Activated CD8-positive, alpha-beta T cell treated with anti-CD3 and anti-CD28 coated beads for 36 hours (primary cell): ENCODE measurements at regions of chr11 and their contacts with region 1.

Region 1: DNA sequence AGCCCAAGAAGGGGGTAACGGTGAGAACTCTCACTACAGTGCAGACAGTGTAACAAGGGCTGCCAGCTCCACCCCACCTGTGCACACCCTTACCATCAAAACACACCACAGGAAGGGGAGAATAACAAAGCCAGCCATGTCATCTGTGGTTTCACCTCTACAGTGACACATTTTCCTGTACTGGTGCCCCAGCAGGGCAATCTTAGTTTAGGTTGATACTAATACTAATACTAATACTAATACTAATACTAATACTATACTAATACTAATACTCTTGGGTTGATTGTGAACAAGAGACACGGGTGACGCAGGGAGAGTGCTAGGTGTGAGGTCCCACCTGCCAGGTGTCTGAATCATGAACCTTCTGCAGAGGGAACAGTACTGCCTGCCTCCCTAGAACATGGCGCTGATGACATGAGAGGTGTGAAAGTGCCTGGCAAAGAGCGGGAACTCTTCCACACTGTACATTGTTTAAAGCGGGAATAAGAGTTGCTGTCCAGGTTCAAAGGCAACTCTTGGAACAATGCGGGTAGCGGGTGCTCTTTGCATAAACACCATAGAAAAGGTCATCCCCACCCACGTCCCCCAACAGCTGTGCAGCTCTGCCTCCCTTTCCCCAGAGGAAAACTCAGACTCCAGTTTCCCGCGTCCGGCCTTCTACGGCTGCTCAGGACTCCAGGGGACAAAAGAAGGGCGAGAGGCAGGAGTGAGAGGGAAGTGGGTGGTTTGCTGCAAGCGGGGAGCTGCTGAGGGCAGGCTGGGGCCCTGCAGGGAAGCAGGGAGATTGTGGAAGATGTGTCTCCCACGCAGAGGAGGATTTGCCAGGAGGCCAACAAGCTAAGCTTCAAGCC is 25.0 kb upstream of the TMPRSS4 start:
- DNase-seq: peak; percentile 85
- ATAC-seq: peak; percentile 78
- H3K4me3 Mint-ChIP-seq: no peak overlapping the region
- H3K27ac Mint-ChIP-seq: peak overlapping the region; percentile 82
- H3K4me1 Mint-ChIP-seq: peaks cover 59% of the 10 kb centered on the region
- H3K27me3 Mint-ChIP-seq: no peaks in the 10 kb centered on the region
- CTCF ChIP-seq: no peak

Region 2: GRCh38 chr11:117817368-117818040 is 234.3 kb before region 1 on chr11:
- CTCF ChIA-PET with region 1: interaction called, 168 read pairs
- POLR2A ChIA-PET with region 1: interaction called, 4 read pairs
- intact Hi-C with region 1: loop called (anchors 5 kb)
- DNase-seq: peak; percentile 94
- ATAC-seq: peak; percentile 53
- H3K4me3 Mint-ChIP-seq: peak overlapping the region; percentile 63
- H3K27ac Mint-ChIP-seq: peak overlapping the region; percentile 98
- H3K4me1 Mint-ChIP-seq: peaks cover 72% of the 10 kb centered on the region
- H3K27me3 Mint-ChIP-seq: no peaks in the 10 kb centered on the region
- CTCF ChIP-seq: peak; percentile 99

Region 3: GRCh38 chr11:117851106-117851505 is 200.7 kb before region 1 on chr11:
- CTCF ChIA-PET with region 1: interaction called, 118 read pairs
- POLR2A ChIA-PET with region 1: interaction called, 3 read pairs
- intact Hi-C with region 1: no loop called
- DNase-seq: no peak
- ATAC-seq: no peak
- H3K4me3 Mint-ChIP-seq: no peak overlapping the region
- H3K27ac Mint-ChIP-seq: no peak overlapping the region
- H3K4me1 Mint-ChIP-seq: peaks cover 14% of the 10 kb centered on the region
- H3K27me3 Mint-ChIP-seq: no peaks in the 10 kb centered on the region
- CTCF ChIP-seq: no peak

Region 4: DNA sequence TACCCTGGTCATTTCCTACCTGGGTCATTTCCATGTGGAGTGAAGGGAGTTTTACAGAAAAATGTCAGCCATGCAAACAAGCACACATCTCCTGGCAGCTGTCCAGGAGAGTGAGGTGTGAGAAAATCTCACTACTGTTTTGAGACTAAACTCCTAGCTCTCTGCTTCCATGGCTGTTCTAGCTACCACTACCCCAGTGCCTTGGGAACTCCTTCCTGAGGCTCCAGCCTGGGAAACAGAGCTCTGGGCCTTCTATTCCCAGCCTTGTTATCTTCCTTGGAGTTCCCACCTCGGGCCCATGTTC is 119.8 kb before region 1 on chr11:
- CTCF ChIA-PET with region 1: interaction called, 14 read pairs
- POLR2A ChIA-PET with region 1: interaction called, 5 read pairs
- intact Hi-C with region 1: no loop called
- DNase-seq: peak; percentile 91
- ATAC-seq: peak; percentile 35
- H3K4me3 Mint-ChIP-seq: peak overlapping the region; percentile 24
- H3K27ac Mint-ChIP-seq: peak overlapping the region; percentile 98
- H3K4me1 Mint-ChIP-seq: peaks cover 84% of the 10 kb centered on the region
- H3K27me3 Mint-ChIP-seq: no peaks in the 10 kb centered on the region
- CTCF ChIP-seq: no peak

Region 5: DNA sequence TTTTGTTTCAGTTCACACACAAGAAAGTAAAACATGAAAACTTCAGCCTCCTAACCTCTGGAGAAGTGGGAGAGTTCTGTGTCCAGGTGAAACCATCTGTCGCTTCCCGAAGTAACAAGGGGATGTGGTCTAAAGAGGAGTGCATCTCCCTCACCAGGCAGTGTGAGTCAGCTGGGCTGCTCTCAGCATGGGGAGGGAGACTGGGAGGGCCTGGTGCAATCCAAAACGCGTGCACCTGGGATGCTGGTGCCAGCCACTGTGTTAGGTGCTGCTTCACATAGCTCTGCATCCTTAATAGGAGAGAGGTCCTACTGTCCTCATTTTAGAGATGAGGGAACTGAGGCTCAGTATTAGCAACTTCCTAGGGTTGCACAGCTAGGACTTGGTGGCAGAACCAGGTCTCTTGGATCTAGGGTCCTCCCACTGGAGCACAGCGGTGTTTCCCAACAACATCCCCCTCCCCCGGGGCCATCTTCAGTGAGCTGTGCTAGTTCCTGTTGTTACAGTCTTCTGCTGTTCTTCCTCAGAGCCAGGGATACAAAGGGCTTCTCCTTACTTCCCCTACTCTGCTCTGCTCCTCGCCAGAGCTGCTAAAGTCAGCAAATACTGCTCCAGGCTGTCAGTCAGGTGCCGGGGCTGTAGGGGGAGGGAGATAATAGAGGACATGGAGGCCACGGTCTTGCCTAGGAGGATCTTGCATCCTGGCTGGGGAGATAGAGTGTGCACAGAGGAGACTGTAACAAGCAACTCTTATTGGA is 57.7 kb before region 1 on chr11:
- CTCF ChIA-PET with region 1: interaction called, 81 read pairs
- POLR2A ChIA-PET with region 1: interaction called, 155 read pairs
- intact Hi-C with region 1: no loop called
- DNase-seq: peak; percentile 1
- ATAC-seq: no peak
- H3K4me3 Mint-ChIP-seq: no peak overlapping the region
- H3K27ac Mint-ChIP-seq: peak overlapping the region; percentile 65
- H3K4me1 Mint-ChIP-seq: peaks cover 89% of the 10 kb centered on the region
- H3K27me3 Mint-ChIP-seq: no peaks in the 10 kb centered on the region
- CTCF ChIP-seq: no peak

Region 6: GRCh38 chr11:118071416-118072030 is 19.7 kb after region 1 on chr11:
- CTCF ChIA-PET with region 1: interaction called, 15 read pairs
- POLR2A ChIA-PET with region 1: no interaction called
- intact Hi-C with region 1: no loop called
- DNase-seq: no peak
- ATAC-seq: no peak
- H3K4me3 Mint-ChIP-seq: no peak overlapping the region
- H3K27ac Mint-ChIP-seq: no peak overlapping the region
- H3K4me1 Mint-ChIP-seq: no peaks in the 10 kb centered on the region
- H3K27me3 Mint-ChIP-seq: no peaks in the 10 kb centered on the region
- CTCF ChIP-seq: no peak